ENCODE measurements at regions of chr15 and their contacts with region 1.

Region 1: DNA sequence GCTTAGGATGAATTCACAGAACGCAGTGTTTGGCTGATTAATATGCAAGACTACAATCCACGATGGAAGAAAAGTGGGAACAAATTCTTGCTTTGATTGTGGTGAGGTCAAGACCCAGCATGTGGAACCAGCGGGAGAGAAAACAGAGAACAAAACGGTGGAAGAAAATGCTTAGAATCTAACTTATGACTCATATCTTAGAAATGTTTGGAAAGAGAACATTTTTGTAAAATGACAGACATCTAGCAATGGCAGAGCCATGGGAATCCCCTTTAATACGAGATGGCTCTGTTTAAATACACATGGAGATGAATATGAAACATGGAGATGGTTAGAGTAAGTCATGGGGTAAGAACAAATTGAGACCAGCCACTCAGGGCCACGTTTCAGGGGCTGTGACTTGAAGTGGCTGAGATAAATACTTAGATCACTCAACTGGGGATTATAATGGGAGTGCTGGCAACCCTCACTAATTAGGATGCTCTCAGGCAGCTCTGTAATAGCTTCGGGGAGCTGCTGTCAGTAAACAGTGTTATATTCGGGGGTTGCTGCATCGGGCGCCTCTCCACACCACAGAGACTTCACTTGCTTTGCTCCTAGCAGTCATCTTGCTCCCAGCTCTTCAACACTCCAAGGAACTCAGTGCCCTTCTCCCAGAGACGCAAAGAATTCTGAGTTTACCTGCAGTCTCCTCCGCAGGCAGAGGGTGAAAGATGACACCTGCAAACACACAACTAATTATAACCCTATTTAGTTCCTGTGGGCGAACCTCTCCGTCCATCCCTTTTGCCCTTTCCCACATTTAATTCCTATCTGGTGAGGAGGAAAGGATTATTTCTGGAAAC is 68.0 kb upstream of the ONECUT1 start:
- DNase-seq: no peak
- H3K4me3 ChIP-seq: no peak overlapping the region
- H3K27ac ChIP-seq: no peak overlapping the region
- H3K4me1 ChIP-seq: no peaks in the 10 kb centered on the region
- H3K27me3 ChIP-seq: peaks cover 4% of the 10 kb centered on the region
- CTCF ChIP-seq: no peak
- POLR2A ChIP-seq: no peak

Region 2: GRCh38 chr15:52822475-52822874 is 35.7 kb before region 1 on chr15:
- intact Hi-C with region 1: no loop called
- DNase-seq: no peak
- H3K4me3 ChIP-seq: no peak overlapping the region
- H3K27ac ChIP-seq: no peak overlapping the region
- H3K4me1 ChIP-seq: no peaks in the 10 kb centered on the region
- H3K27me3 ChIP-seq: peaks cover 10% of the 10 kb centered on the region
- CTCF ChIP-seq: no peak
- POLR2A ChIP-seq: no peak

Region 3: GRCh38 chr15:52912169-52912568 is 54.0 kb after region 1 on chr15:
- intact Hi-C with region 1: no loop called
- DNase-seq: no peak
- H3K4me3 ChIP-seq: no peak overlapping the region
- H3K27ac ChIP-seq: no peak overlapping the region
- H3K4me1 ChIP-seq: no peaks in the 10 kb centered on the region
- H3K27me3 ChIP-seq: peaks cover 7% of the 10 kb centered on the region
- CTCF ChIP-seq: no peak
- POLR2A ChIP-seq: no peak

Region 4: GRCh38 chr15:53102483-53102882 is 244.3 kb after region 1 on chr15:
- intact Hi-C with region 1: loop called in 1 of 2 experiments (anchors 10 kb)
- DNase-seq: no peak
- H3K4me3 ChIP-seq: no peak overlapping the region
- H3K27ac ChIP-seq: no peak overlapping the region
- H3K4me1 ChIP-seq: no peaks in the 10 kb centered on the region
- H3K27me3 ChIP-seq: no peaks in the 10 kb centered on the region
- CTCF ChIP-seq: no peak
- POLR2A ChIP-seq: no peak

Measured in adrenal gland (tissue), 19 donors.